ENCODE measurements at regions of chr17 and their contacts with region 1.

Region 1: GRCh38 chr17:45135192-45135977 is at the start of gene ACBD4:
- DNase-seq: peak; percentile 96
- H3K4me3 ChIP-seq: peak within 1 kb of the TSS; percentile 81 to 85
- H3K27ac ChIP-seq: peak within 1 kb of the TSS in 1 of 2 experiments; percentile 60; a peak in 1 of 4 replicates
- H3K4me1 ChIP-seq: peaks cover 0 to 25% of the 10 kb centered on the region in 2 experiments; a peak in 1 of 4 replicates
- H3K27me3 ChIP-seq: no peaks in the 10 kb centered on the region
- CTCF ChIP-seq: peak; percentile 100
- EP300 ChIP-seq: no peak
- RAD21 ChIP-seq: peak; percentile 95
- polyA plus RNA-seq, gene ACBD4: 15.8 and 18.1 TPM in 2 replicates

Region 2: GRCh38 chr17:44794851-44795413 is 340.5 kb before region 1 on chr17:
- CTCF ChIA-PET with region 1: no interaction called
- POLR2A ChIA-PET with region 1: no interaction called
- DNase-seq: no peak
- H3K4me3 ChIP-seq: no peak overlapping the region
- H3K27ac ChIP-seq: peak overlapping the region in 1 of 2 experiments; percentile 78; a peak in 2 of 4 replicates
- H3K4me1 ChIP-seq: peaks cover 0 to 12% of the 10 kb centered on the region in 2 experiments; a peak in 1 of 4 replicates
- H3K27me3 ChIP-seq: no peaks in the 10 kb centered on the region
- CTCF ChIP-seq: no peak
- EP300 ChIP-seq: peak in 1 of 2 experiments; percentile 57; a peak in 1 of 4 replicates
- RAD21 ChIP-seq: no peak

Region 3: GRCh38 chr17:44919885-44920564 is 215.4 kb before region 1 on chr17:
- CTCF ChIA-PET with region 1: interaction called, 17 read pairs
- POLR2A ChIA-PET with region 1: no interaction called
- DNase-seq: peak; percentile 89
- H3K4me3 ChIP-seq: no peak overlapping the region; a peak in 1 of 4 replicates
- H3K27ac ChIP-seq: no peak overlapping the region; a peak in 1 of 4 replicates
- H3K4me1 ChIP-seq: peaks cover 18 to 42% of the 10 kb centered on the region in 2 experiments; a peak in 3 of 4 replicates
- H3K27me3 ChIP-seq: no peaks in the 10 kb centered on the region
- CTCF ChIP-seq: peak; percentile 84
- EP300 ChIP-seq: no peak; a peak in 1 of 4 replicates
- RAD21 ChIP-seq: peak; percentile 98

Region 4: DNA sequence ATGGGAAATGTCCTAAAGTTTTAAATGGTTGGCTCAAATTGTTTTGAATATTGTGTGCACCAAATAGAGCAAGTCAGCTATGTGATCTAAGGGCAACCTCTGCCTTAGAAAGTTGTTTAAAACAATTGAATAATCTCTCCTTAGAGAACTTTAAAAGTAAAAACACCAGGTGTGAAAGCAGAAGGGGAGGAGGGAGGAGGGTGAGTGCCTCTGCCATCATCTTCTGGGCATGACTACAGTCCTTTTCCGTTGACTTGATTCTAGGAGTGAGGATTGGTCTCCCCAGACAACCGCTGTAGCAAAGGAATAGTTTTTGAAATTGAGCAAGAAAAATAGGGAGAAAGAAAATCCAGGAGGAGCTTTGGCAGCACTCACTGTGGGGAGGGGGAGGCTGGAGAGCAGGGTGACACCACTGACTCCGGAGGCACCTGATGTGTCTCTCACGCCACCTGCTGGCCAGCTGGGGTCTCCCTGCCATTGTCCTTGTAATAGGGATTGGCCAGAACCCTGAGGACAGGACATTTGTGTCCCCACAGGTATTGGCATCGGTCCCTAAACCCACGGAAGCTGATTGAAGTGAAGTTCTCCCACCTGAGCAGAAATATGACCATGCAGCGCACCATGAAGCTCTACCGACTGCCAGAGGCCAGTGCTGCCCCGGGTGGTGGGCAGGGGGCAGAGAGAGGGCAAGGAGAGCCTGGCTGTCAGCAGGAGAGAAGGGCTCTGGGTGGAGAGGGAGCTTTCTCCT is 36.3 kb before region 1 on chr17:
- CTCF ChIA-PET with region 1: interaction called, 194 read pairs
- POLR2A ChIA-PET with region 1: no interaction called
- DNase-seq: peak; percentile 93
- H3K4me3 ChIP-seq: no peak overlapping the region; a peak in 1 of 4 replicates
- H3K27ac ChIP-seq: peak overlapping the region in 1 of 2 experiments; percentile 19; a peak in 1 of 4 replicates
- H3K4me1 ChIP-seq: peaks cover 0 to under 1% of the 10 kb centered on the region in 2 experiments; a peak in 1 of 4 replicates
- H3K27me3 ChIP-seq: no peaks in the 10 kb centered on the region
- CTCF ChIP-seq: peak; percentile 91
- EP300 ChIP-seq: no peak
- RAD21 ChIP-seq: peak; percentile 83

Region 5: GRCh38 chr17:45123930-45124796 is 11.2 kb before region 1 on chr17:
- CTCF ChIA-PET with region 1: interaction called, 169 read pairs
- POLR2A ChIA-PET with region 1: no interaction called
- DNase-seq: peak; percentile 80
- H3K4me3 ChIP-seq: no peak overlapping the region
- H3K27ac ChIP-seq: peak overlapping the region; percentile 56 to 93
- H3K4me1 ChIP-seq: peaks cover 36 to 41% of the 10 kb centered on the region in 2 experiments; a peak in 3 of 4 replicates
- H3K27me3 ChIP-seq: no peaks in the 10 kb centered on the region
- CTCF ChIP-seq: no peak
- EP300 ChIP-seq: peak in 1 of 2 experiments; percentile 81; a peak in 2 of 4 replicates
- RAD21 ChIP-seq: no peak

Region 6: GRCh38 chr17:45172454-45173286 is 37.3 kb after region 1 on chr17:
- CTCF ChIA-PET with region 1: interaction called, 37 read pairs
- POLR2A ChIA-PET with region 1: no interaction called
- DNase-seq: peak; percentile 93
- H3K4me3 ChIP-seq: peak overlapping the region; percentile 25 to 30; a peak in 3 of 4 replicates
- H3K27ac ChIP-seq: peak overlapping the region; percentile 89 to 94
- H3K4me1 ChIP-seq: peaks cover 29 to 40% of the 10 kb centered on the region in 2 experiments; a peak in 3 of 4 replicates
- H3K27me3 ChIP-seq: no peaks in the 10 kb centered on the region
- CTCF ChIP-seq: peak; percentile 28; the same call in 1 of the 2 replicates
- EP300 ChIP-seq: peak; percentile 34 to 66; a peak in 2 of 4 replicates
- RAD21 ChIP-seq: peak; percentile 6; the same call in 1 of the 2 replicates

Region 7: DNA sequence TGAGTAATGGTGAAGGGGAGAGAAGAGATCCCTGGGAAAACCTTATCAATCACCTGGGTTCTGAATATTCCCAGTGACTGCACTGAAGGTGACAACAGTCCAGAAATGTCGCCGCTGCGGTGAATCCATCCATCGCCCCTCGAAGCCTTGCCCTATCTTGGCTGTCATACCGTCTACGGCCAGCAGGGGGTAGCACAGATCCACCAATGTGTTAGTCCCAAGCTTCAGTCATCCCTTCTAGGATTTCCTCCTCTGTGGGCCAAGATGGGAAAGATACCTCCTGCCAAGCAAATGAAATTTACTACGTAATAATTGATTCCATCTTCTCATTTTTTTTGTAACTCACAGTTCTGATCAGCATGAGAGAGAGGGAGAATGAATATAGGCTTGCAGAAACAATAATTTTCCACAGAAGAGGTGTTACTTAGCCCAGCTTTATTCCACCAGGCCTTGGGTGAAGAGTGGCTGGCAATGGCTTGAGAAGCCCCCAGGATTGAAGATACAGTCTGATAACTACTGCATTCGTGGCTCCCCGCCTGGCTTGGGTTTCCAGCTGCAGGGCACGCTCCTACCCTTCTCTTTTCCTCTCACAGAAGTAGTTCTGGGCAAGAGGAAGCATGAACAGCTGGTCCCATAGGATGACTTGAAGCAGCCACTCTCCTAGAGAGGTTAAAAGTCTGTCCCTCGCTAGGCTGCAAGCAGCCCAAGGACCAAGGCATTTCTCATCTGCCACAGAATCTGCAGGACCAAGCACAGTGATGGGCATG is 83.7 kb after region 1 on chr17:
- CTCF ChIA-PET with region 1: interaction called, 38 read pairs
- POLR2A ChIA-PET with region 1: no interaction called
- DNase-seq: peak; percentile 86
- H3K4me3 ChIP-seq: peak overlapping the region in 1 of 2 experiments; percentile 28; a peak in 1 of 4 replicates
- H3K27ac ChIP-seq: no peak overlapping the region
- H3K4me1 ChIP-seq: peaks cover 0 to 24% of the 10 kb centered on the region in 2 experiments; a peak in 1 of 4 replicates
- H3K27me3 ChIP-seq: no peaks in the 10 kb centered on the region
- CTCF ChIP-seq: peak; percentile 93
- EP300 ChIP-seq: no peak; a peak in 1 of 4 replicates
- RAD21 ChIP-seq: peak; percentile 100

Region 8: GRCh38 chr17:45325810-45326209 is 190.4 kb after region 1 on chr17:
- CTCF ChIA-PET with region 1: no interaction called
- POLR2A ChIA-PET with region 1: no interaction called
- DNase-seq: no peak
- H3K4me3 ChIP-seq: no peak overlapping the region
- H3K27ac ChIP-seq: no peak overlapping the region
- H3K4me1 ChIP-seq: peaks cover 4 to 11% of the 10 kb centered on the region in 2 experiments; a peak in 3 of 4 replicates
- H3K27me3 ChIP-seq: no peaks in the 10 kb centered on the region
- CTCF ChIP-seq: no peak
- EP300 ChIP-seq: no peak
- RAD21 ChIP-seq: no peak

Measured in SK-N-SH (cell line).